CD8-positive, alpha-beta T cell (primary cell): ENCODE measurements at regions of chrX and their contacts with region 1.

Region 1: DNA sequence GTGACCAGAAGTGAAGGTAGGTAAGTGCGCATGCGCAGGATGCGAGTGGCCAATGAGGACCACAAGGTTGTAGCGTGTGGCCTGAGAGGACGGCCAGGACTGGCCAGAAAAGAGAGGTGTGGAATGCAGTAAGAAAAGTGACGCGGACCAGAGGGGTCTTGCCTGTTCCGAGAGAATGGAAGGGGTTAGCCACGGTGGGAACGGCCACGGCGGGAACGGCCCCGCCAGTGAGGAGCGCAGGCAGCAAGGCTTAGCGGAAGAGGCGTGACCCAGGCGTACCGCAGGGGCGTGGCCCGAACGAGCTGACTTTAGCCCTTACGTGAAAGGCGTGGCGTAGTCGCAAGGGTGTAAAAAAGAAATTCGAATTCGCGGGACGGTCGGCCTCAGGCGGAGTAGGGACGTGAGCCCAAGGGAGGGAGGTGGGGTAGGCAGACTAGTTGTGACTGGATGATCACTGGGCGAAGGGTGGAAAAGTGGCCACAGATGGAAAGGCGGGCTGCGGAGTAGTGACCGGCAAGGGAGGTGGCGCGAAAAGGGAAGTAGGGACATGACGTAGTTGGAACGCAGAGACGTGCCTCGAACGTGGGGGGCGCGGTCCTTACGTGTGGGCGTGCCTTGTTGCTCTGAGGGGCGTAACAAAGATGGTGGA is 10.4 kb upstream of the CLTRN start:
- DNase-seq: peak; percentile 75 to 96 (median 90)
- ATAC-seq: peak; percentile 86
- H3K4me3 ChIP-seq: peak overlapping the region; percentile 89 to 99
- H3K4me3 Mint-ChIP-seq: no peak overlapping the region
- H3K27ac ChIP-seq: peak overlapping the region; percentile 100
- H3K27ac Mint-ChIP-seq: no peak overlapping the region
- H3K4me1 ChIP-seq: peaks cover 16% of the 10 kb centered on the region
- H3K4me1 Mint-ChIP-seq: peaks cover 27% of the 10 kb centered on the region
- H3K27me3 ChIP-seq: no peaks in the 10 kb centered on the region
- H3K27me3 Mint-ChIP-seq: no peaks in the 10 kb centered on the region
- CTCF ChIP-seq: no peak

Region 2: DNA sequence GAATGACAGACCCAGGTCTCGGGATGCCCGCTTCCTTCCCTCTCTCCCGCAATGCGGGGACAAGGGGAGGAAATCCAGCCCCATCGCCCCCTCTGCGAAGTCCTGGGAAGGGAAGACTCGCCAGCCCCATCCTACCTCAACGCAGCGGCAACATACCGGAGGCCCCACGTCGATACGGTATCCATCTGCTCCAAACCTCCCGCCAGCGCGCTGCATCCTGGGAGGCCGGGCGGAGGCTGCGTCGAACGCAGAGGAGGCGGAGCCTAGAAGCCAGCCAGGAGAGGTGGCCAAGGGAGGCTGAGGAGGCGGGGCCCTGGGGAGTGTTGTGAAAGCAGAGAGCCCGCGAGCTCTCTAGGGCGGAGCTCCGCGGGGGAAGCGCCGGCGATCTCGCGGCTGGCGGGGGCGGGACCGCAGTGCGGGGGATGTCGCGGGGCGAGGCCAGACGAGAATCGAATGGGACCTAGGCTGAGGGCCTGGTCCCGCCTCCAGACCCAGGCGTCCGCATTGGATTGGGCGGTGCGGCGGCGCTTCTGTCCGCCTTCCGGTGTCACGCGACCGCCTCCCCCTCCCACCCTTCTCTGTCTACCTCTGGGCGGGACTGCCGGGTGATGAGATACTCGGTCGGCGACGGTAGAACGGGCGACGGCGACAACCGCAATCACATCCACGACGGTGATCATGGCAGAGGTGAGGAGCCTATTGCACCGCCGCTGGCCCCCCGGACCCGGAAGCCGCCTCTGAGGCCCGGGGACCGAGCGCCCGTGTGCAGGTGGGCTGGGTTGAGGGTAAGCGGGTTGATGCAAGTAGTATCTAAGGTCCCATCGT is 801.9 kb before region 1 on chrX and contains the starts of genes FANCB and MOSPD2:
- CTCF ChIA-PET with region 1: no interaction called
- POLR2A ChIA-PET with region 1: no interaction called
- intact Hi-C with region 1: loop called in 1 of 2 experiments (anchors 2 kb)
- DNase-seq: peak; percentile 85 to 97 (median 92)
- ATAC-seq: peak; percentile 89
- H3K4me3 ChIP-seq: peak within 1 kb of the TSS; percentile 81 to 83
- H3K4me3 Mint-ChIP-seq: peak within 1 kb of the TSS; percentile 84
- H3K27ac ChIP-seq: peak within 1 kb of the TSS; percentile 79 to 86
- H3K27ac Mint-ChIP-seq: peak within 1 kb of the TSS; percentile 92
- H3K4me1 ChIP-seq: peaks cover 9% of the 10 kb centered on the region
- H3K4me1 Mint-ChIP-seq: peaks cover 21% of the 10 kb centered on the region
- H3K27me3 ChIP-seq: no peaks in the 10 kb centered on the region
- H3K27me3 Mint-ChIP-seq: no peaks in the 10 kb centered on the region
- CTCF ChIP-seq: no peak
- total RNA-seq, gene FANCB: 2.5 to 3.1 TPM
- total RNA-seq, gene MOSPD2: 4.2 to 4.6 TPM

Region 3: GRCh38 chrX:15471016-15471415 is 203.9 kb before region 1 on chrX:
- CTCF ChIA-PET with region 1: no interaction called
- POLR2A ChIA-PET with region 1: no interaction called
- intact Hi-C with region 1: no loop called
- DNase-seq: peak; percentile 1 to 66 (median 40)
- ATAC-seq: peak; percentile 56
- H3K4me3 ChIP-seq: no peak overlapping the region
- H3K4me3 Mint-ChIP-seq: no peak overlapping the region
- H3K27ac ChIP-seq: no peak overlapping the region
- H3K27ac Mint-ChIP-seq: no peak overlapping the region
- H3K4me1 ChIP-seq: no peaks in the 10 kb centered on the region
- H3K4me1 Mint-ChIP-seq: no peaks in the 10 kb centered on the region
- H3K27me3 ChIP-seq: no peaks in the 10 kb centered on the region
- H3K27me3 Mint-ChIP-seq: peaks cover 5% of the 10 kb centered on the region
- CTCF ChIP-seq: peak; percentile 58

Region 4: GRCh38 chrX:15737960-15738902 is 63.3 kb after region 1 on chrX and contains the start of gene CA5B:
- CTCF ChIA-PET with region 1: no interaction called
- POLR2A ChIA-PET with region 1: interaction called, 3 read pairs
- intact Hi-C with region 1: loop called (anchors 1 kb)
- DNase-seq: peak; percentile 93 to 100 (median 96)
- ATAC-seq: peak; percentile 96
- H3K4me3 ChIP-seq: peak within 1 kb of the TSS; percentile 84 to 85
- H3K4me3 Mint-ChIP-seq: peak within 1 kb of the TSS; percentile 94
- H3K27ac ChIP-seq: peak within 1 kb of the TSS; percentile 76 to 81
- H3K27ac Mint-ChIP-seq: peak within 1 kb of the TSS; percentile 92
- H3K4me1 ChIP-seq: peaks cover 23% of the 10 kb centered on the region
- H3K4me1 Mint-ChIP-seq: peaks cover 41% of the 10 kb centered on the region
- H3K27me3 ChIP-seq: no peaks in the 10 kb centered on the region
- H3K27me3 Mint-ChIP-seq: no peaks in the 10 kb centered on the region
- CTCF ChIP-seq: no peak
- total RNA-seq, gene CA5B: 33.9 to 35.2 TPM

Region 5: DNA sequence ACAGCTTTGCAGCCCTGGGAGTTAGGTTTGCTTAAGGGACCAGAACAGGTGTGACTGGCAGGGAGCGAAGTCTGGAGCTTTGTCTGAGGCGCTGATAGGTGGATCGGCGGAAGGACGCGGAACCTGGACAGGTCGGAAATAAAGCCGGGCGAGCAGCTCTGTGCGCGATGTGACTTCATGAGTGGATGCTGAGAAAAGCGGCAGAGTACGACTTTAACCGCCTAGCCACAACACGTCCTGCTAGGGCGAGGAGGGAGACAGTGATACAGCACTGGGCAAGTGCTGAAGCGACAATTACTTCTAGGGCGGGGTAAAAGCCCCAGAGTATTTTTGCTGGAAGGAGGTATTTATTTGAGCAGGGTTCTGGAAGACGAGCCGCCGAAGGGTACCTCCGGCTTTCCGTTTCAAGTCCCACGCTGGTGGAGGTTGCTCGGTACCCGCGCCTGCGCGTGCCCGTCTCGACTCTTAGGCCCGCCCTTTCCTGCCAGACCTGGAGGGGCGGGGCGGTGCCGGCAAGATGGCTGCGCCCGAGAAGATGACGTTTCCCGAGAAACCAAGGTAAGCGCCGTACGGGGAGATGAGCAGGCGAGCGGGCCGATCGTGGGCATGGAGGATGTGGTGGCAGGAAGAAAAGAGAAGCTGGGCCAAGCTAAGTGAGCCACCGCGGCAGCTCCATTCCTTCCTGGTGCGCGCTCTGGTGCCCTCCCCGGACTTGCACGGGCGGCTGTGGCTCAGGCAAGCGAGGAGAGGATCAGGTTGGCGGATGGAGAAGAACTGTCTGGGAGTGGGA is 115.2 kb after region 1 on chrX and contains the start of gene ZRSR2:
- CTCF ChIA-PET with region 1: no interaction called
- POLR2A ChIA-PET with region 1: interaction called, 3 read pairs
- intact Hi-C with region 1: loop called (anchors 1 to 2 kb)
- DNase-seq: peak; percentile 68 to 94 (median 89)
- ATAC-seq: peak; percentile 92
- H3K4me3 ChIP-seq: peak within 1 kb of the TSS; percentile 78 to 85
- H3K4me3 Mint-ChIP-seq: no peak within 1 kb of the TSS
- H3K27ac ChIP-seq: peak within 1 kb of the TSS; percentile 89 to 92
- H3K27ac Mint-ChIP-seq: no peak within 1 kb of the TSS
- H3K4me1 ChIP-seq: peaks cover 18% of the 10 kb centered on the region
- H3K4me1 Mint-ChIP-seq: peaks cover 27% of the 10 kb centered on the region
- H3K27me3 ChIP-seq: no peaks in the 10 kb centered on the region
- H3K27me3 Mint-ChIP-seq: no peaks in the 10 kb centered on the region
- CTCF ChIP-seq: no peak
- total RNA-seq, gene ZRSR2: 21.1 to 21.2 TPM

Region 6: DNA sequence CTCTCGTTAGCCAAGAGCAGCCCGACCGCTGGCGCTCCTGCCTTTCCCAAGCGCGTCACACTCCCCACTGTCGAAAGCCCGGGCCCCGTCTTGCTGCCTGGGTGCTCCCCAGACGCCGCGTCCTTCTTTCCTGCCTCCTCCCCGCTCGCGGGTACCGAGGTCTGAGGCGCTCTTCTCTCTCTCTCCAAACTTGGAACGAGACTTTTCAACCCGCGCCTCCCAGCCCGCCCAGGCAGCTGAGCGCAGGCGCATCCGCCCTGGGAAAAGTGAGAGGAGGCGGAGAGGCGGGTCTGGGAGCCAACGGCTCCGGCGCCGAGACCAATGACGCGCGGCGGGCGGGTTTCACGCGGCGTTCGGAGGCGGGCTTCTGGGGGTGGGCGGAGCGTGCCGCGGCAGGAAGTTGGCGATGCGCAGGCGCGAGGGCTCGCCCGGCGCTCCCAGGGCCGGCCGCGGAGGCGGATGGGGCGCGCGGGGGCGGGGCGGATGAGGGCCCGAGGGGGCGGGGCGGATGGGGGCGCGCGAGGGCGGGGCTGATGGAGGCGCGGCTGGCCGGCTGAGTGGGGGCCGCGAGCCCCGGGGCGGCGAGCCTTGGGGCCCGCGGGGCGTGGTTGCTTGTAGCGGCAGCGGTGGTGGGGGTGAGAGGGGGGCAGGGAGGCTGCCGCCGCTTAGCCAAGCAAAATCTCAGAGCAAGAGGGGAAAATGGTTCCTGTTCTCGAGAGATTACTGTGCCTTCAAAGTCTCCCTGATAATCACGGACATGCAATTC is 1195.3 kb after region 1 on chrX and contains the start of gene RBBP7:
- CTCF ChIA-PET with region 1: no interaction called
- POLR2A ChIA-PET with region 1: no interaction called
- intact Hi-C with region 1: loop called (anchors 5 to 10 kb)
- DNase-seq: peak; percentile 83 to 97 (median 89)
- ATAC-seq: peak; percentile 80
- H3K4me3 ChIP-seq: peak within 1 kb of the TSS; percentile 73 to 82
- H3K4me3 Mint-ChIP-seq: peak within 1 kb of the TSS; percentile 94
- H3K27ac ChIP-seq: peak within 1 kb of the TSS; percentile 91 to 97
- H3K27ac Mint-ChIP-seq: peak within 1 kb of the TSS; percentile 97
- H3K4me1 ChIP-seq: peaks cover 20% of the 10 kb centered on the region
- H3K4me1 Mint-ChIP-seq: peaks cover 42% of the 10 kb centered on the region
- H3K27me3 ChIP-seq: no peaks in the 10 kb centered on the region
- H3K27me3 Mint-ChIP-seq: no peaks in the 10 kb centered on the region
- CTCF ChIP-seq: no peak
- total RNA-seq, gene RBBP7: 130 to 131 TPM